Esophagus squamous epithelium (tissue), 5 donors: ENCODE measurements at regions of chr2 and their contacts with region 1.

Region 1: DNA sequence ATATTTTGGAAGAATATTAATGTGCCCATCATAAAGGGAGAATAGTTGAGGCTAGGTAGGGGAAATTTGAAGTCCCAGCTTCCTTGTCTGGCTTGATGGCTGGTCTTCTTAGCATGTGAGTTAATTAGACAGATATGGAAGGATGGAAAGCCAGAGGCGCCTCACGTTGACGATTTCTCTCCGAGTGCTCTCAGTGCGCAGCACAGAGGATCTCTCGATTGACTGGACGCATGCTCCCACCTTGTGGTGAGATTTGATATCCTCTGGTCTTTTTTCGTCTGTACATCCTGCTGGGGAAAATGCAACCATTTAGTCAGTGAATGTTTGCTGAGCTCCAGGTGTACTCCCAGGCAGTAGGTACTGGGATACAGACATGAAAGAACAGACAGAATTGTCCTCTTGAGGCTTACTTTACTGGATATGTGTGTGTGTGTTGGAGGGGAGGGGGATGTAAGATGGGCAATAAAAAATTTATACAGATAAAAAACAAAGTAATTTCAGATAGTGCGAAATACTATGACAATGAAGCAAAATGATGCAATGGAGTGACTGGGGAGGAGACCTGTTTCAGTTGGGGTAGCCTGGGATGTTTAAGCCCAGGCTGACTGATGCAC is 66.9 kb upstream of the ZNG1B start:
- DNase-seq: no peak
- H3K4me3 ChIP-seq: no peak overlapping the region
- H3K27ac ChIP-seq: no peak overlapping the region
- H3K4me1 ChIP-seq: peaks cover 0 to 29% (median 0%) of the 10 kb centered on the region in 3 donors
- H3K27me3 ChIP-seq: no peaks in the 10 kb centered on the region
- CTCF ChIP-seq: peak in 5 of 6 experiments; percentile 59 to 87 (median 78)
- POLR2A ChIP-seq: no peak

Region 2: GRCh38 chr2:113138428-113139322 is 231.9 kb before region 1 on chr2:
- intact Hi-C with region 1: loop called (anchors 10 kb)
- DNase-seq: no peak
- H3K4me3 ChIP-seq: no peak overlapping the region
- H3K27ac ChIP-seq: peak overlapping the region in 3 of 4 donors; percentile 47 to 83 (median 64)
- H3K4me1 ChIP-seq: peaks cover 0 to 24% (median 6%) of the 10 kb centered on the region in 3 donors
- H3K27me3 ChIP-seq: no peaks in the 10 kb centered on the region
- CTCF ChIP-seq: peak; percentile 69 to 84 (median 80)
- POLR2A ChIP-seq: no peak

Region 3: DNA sequence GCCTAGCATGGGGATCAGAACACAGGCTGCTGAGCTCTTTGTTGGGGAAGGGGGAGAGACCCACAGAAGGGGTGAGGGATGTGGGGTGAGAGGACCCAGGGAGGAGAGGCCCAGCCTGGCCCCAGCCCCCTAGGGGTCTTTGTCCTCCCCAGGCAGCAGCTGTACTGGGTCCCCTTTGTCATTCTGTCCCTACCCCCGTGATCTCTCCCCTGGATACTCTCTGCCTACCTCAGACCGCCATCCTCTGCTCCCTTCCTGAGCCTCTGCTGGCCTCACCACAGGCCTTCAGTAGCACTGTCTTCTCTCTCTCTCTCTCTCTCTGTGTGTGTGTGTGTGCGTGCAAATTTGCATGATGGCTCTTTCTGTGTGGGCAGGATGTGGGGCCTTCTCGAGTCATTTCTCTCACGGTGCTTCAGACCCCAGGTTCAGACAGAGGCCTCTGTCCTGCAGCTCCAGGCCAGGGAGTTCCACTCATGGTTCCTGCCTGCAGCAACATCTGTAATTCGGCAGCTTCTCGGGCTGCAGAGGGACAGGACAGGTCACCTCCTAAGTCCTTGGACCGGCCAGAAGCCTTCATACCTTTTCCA is 195.4 kb before region 1 on chr2:
- intact Hi-C with region 1: no loop called
- DNase-seq: peak; percentile 17
- H3K4me3 ChIP-seq: peak overlapping the region in 3 of 4 donors; percentile 32 to 59 (median 37)
- H3K27ac ChIP-seq: peak overlapping the region in 2 of 4 donors; percentile 72 to 83
- H3K4me1 ChIP-seq: peaks cover 0 to 24% (median 0%) of the 10 kb centered on the region in 3 donors
- H3K27me3 ChIP-seq: no peaks in the 10 kb centered on the region
- CTCF ChIP-seq: no peak
- POLR2A ChIP-seq: no peak

Region 4: GRCh38 chr2:113248997-113249770 is 121.4 kb before region 1 on chr2:
- intact Hi-C with region 1: loop called (anchors 5 kb)
- DNase-seq: no peak
- H3K4me3 ChIP-seq: no peak overlapping the region
- H3K27ac ChIP-seq: no peak overlapping the region
- H3K4me1 ChIP-seq: peaks cover 0 to 17% (median 0%) of the 10 kb centered on the region in 3 donors
- H3K27me3 ChIP-seq: no peaks in the 10 kb centered on the region
- CTCF ChIP-seq: peak; percentile 77 to 94 (median 92)
- POLR2A ChIP-seq: no peak

Region 5: DNA sequence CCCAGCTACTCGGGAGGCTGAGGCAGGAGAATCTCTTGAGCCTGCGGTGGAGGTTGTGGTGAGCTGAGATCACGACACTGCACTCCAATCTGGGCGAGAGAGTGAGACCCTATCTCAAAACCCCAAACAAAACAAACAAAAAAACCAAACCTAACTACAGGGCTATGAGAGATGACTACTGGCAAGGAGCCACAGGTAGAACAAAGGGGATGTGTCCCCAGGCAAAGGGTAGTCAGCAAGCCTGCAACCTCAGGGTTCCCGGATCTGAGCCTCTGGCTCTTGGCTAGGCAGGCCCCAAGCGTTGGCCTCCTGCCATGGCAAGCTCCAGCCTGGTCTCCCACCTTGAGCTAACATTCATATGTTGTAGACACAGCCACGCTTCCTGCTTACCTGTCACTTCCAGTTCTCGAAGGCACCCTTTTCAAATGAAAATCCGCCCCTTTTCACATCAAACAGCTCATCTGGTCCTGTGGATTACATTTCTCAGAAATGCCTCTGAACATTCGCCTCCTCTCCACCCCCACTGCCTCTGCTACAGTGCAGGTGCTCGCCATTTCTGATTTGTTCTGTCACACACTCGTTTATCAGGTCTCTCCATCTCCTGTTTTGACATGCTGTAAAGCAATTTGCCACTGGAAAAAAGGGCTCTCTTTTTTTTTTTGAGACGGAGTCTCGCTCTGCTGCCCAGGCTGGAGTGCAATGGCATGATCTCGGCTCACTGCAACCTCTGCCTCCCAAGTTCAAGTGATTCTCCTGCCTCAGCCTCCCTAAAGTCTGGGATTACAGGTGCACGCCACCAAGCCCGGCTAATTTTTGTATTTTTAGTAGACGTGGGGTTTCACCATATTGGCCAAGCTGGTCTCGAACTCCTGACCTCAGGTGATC is 506.2 kb after region 1 on chr2:
- intact Hi-C with region 1: no loop called
- DNase-seq: no peak
- H3K4me3 ChIP-seq: no peak overlapping the region
- H3K27ac ChIP-seq: peak overlapping the region in 3 of 4 donors; percentile 57 to 69 (median 66)
- H3K4me1 ChIP-seq: peaks cover 10 to 32% (median 12%) of the 10 kb centered on the region in 3 donors
- H3K27me3 ChIP-seq: no peaks in the 10 kb centered on the region
- CTCF ChIP-seq: peak in 1 of 6 experiments; percentile 4
- POLR2A ChIP-seq: no peak